Right ventricle myocardium superior (tissue), 1 donor: ENCODE measurements at regions of chr1 and their contacts with region 1.

Region 1: GRCh38 chr1:206912445-206913095 is 9.2 kb downstream of the FCMR start:
- DNase-seq: peak; percentile 62
- ATAC-seq: peak; percentile 76

Region 2: GRCh38 chr1:206734499-206735142 is 177.9 kb before region 1 on chr1:
- intact Hi-C with region 1: loop called (anchors 5 kb)
- DNase-seq: peak; percentile 62
- ATAC-seq: peak; percentile 31

Region 3: DNA sequence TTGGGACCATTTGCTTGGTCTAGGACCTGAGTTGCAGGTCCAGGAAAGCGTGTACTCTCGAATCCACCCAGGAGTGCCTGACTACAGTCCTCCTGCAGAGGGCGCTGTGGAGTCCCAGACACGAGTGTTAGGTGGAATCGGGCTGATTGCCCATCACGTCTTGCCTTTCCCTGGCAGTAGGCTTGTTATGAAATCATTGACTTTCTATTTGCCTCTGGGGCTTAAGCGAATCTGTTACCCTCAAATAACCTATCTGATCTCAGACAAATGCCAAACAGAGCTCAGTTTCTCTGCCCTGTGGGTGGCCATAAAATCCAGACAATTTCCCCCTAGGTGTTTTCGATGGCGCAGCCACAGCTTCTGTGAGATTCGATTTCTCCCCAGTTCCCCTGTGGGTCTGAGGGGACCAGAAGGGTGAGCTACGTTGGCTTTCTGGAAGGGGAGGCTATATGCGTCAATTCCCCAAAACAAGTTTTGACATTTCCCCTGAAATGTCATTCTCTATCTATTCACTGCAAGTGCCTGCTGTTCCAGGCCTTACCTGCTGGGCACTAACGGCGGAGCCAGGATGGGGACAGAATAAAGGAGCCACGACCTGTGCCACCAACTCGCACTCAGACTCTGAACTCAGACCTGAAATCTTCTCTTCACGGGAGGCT is 47.4 kb before region 1 on chr1 and contains the start of gene IL20:
- intact Hi-C with region 1: loop called (anchors 5 kb)
- DNase-seq: peak; percentile 84
- ATAC-seq: peak; percentile 89
- total RNA-seq, gene IL20: not detected